GM10248 (cell line): ENCODE measurements at regions of chr1 and their contacts with region 1.

Region 1: DNA sequence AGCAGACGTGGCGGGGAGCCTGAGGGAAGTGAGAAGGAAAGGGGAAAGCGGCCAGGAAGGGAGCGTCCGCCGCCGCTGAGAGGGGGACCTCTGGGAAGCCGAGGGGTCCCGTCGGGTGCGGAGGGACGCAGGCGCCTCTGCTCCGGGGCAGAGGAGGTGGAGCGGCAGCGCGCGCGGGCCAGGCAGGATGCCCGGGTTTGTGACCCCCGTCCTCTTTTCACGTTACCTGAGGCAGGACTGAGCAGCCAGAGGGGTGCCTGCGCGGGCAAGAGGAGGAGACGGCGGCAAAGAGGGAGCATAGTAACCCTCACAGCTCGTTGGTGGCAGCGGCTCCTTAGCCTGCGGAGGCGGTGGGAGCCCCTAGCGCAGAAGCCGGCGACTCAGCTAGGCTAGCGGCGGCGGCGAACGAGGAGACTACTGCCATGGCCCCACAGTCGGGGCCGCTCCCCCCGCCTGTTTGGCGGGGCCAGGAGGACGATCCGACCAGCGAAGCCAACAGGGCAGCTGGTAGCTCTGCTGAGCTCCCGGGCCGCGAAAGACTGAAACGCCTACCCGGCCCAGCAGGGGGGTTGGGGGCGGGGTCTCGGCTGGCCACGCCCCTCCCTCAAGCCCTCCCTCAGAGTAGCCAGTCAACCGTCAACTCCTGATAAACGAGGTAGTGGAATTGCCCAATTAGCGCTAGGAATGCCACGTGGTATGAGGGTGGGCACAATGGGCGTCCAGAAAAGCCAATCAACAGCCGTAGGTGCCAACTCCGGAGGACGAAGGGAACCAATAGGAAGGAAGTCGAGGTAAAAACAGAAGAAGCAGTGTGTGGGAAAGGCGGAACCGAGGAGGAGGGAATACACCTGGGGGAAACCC is at the start of gene TESK2:
- DNase-seq: peak; percentile 95
- CTCF ChIP-seq: no peak

Region 2: DNA sequence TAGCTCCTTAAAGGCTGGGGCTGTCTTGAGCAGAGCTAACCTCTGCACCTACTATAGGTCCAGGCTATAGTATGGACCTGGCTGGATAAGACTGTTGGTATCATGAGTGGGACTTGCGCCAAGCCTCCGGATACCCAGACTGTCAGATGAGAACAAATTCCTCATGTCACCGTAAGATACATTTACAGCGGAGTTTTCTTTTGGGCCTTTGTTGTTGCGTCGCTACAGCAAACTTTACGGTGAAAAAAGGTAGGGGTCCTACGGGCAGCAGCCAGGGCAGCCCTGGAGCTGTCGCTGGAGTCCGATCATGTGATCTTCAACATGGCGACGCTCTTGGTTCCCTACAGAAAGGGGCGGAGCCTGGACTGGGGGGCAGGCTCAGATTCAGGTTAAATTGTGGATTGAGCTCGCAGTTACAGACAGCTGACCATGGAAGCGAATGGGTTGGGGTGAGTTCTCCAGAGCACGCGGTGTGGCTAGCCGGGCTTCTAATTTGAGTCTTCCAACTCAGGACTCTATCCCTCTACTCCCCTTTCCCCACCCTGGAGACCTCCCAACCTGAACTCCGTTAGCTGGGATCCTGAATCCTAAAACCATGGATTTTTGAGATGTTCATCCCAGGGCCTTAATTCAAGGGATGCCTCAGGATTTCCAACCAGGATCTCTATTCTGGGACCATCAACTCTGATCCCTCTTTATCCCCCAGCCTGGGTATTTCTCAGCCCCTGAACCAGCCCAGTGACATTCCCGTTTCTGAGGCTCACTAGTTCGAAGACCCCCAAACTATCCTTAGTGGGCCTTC is 478.8 kb before region 1 on chr1 and contains the start of gene UROD:
- CTCF ChIA-PET with region 1: interaction called, 118 read pairs
- POLR2A ChIA-PET with region 1: interaction called, 3 read pairs
- DNase-seq: peak; percentile 95
- CTCF ChIP-seq: no peak

Region 3: GRCh38 chr1:45326627-45327623 is 163.9 kb before region 1 on chr1 and contains the start of gene HPDL:
- CTCF ChIA-PET with region 1: interaction called, 12 read pairs
- POLR2A ChIA-PET with region 1: no interaction called
- DNase-seq: peak; percentile 83
- CTCF ChIP-seq: no peak

Region 4: DNA sequence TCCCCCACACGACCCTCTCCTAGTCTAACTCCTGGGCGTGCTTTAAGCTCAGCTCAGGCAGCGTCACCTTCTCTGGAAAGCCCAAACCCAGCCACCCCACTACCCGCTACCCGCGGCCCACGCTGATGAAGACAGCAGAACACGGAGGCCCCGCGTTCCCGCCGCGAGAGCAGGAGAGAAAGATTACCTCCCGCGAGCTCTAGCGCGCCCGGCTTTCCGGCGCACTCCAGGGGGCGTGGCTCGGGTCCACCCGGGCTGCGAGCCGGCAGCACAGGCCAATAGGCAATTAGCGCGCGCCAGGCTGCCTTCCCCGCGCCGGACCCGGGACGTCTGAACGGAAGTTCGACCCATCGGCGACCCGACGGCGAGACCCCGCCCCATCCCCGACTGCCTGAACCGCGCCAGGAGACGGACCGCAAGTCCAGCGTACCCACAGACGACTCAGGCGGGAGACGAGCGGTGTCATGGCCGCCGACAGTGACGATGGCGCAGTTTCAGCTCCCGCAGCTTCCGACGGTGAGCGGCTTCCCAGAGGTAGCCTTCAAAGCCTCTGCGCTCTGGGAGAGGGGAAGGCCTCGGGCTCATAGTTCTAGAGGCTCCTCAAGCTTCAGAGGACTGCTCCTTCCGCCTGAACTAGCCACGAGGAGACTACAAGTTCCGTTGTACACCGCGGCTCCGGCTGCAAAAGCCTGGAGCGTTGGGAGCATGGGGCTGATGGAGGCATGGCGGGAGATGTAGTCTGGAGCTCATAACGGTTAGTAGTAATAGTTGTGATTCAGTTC is 150.9 kb before region 1 on chr1 and contains the starts of genes MUTYH and TOE1:
- CTCF ChIA-PET with region 1: interaction called, 389 read pairs
- POLR2A ChIA-PET with region 1: interaction called, 10 read pairs
- DNase-seq: peak; percentile 96
- CTCF ChIP-seq: no peak

Region 5: GRCh38 chr1:45359882-45360513 is 130.9 kb before region 1 on chr1:
- CTCF ChIA-PET with region 1: interaction called, 389 read pairs
- POLR2A ChIA-PET with region 1: no interaction called
- DNase-seq: no peak
- CTCF ChIP-seq: peak; percentile 58

Region 6: GRCh38 chr1:45370575-45370974 is 120.3 kb before region 1 on chr1:
- CTCF ChIA-PET with region 1: interaction called, 389 read pairs
- POLR2A ChIA-PET with region 1: no interaction called
- DNase-seq: peak; percentile 38
- CTCF ChIP-seq: no peak

Region 7: DNA sequence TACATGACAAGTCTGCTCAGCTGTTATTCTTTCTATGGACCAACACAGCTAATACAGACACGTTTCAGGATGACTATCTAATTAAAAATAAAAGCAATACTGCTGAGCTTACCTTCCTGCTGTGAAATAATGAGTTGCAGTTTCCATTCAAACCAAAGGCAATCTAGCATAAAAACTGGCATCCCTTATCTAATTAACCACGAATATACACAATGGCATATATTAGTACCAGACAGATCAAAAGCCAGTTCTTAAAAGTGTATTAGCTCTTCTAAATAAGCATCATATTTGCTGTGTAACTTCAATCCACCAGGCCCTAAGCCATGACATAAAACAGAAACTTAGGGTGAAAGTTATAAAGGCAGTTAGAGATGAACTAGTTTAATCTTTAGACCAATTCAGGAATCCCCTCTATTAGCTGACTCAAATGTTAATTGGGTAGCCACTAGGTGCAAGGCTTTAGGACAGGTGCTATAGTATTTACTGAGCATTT is 20.5 kb before region 1 on chr1:
- CTCF ChIA-PET with region 1: interaction called, 10 read pairs
- POLR2A ChIA-PET with region 1: no interaction called
- DNase-seq: no peak
- CTCF ChIP-seq: no peak